ENCODE measurements at regions of chr4 and their contacts with region 1.

Region 1: DNA sequence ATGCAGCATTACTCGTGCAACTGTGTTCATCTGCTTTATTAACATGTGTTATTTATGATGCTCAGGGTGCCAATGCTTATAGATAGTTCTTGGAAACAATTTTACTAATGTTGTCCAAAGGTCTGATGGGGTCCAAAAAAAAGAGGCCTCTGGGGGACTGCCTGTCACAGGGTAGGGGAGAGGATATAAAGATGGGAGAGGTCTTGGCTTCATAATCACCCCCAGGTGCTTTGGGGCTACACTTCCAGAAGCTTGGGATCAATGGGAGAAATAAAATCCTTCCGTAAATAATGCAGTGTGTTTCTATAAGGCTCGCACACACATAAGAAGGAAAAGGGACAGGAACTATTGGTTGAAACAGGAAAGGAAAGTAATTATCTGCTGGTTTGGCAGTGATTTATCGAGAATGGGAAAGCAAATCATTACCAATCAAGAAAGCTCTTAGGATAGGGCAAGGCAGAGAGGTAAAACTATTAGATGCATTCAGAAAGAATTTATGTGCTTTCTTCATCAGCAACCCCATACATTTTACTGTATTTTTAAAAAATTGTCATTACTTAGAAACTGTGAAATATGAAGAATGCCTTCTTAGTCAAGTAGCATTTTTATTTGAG is 571.3 kb downstream of the PACRGL start:
- DNase-seq: no peak
- H3K4me3 ChIP-seq: no peak overlapping the region
- H3K27ac ChIP-seq: no peak overlapping the region
- H3K4me1 ChIP-seq: no peaks in the 10 kb centered on the region
- H3K27me3 ChIP-seq: no peaks in the 10 kb centered on the region
- CTCF ChIP-seq: no peak
- POLR2A ChIP-seq: no peak

Region 2: GRCh38 chr4:19539201-19539600 is 1732.3 kb before region 1 on chr4:
- intact Hi-C with region 1: loop called (anchors 5 kb)
- DNase-seq: no peak
- H3K4me3 ChIP-seq: no peak overlapping the region
- H3K27ac ChIP-seq: no peak overlapping the region
- H3K4me1 ChIP-seq: no peaks in the 10 kb centered on the region
- H3K27me3 ChIP-seq: no peaks in the 10 kb centered on the region
- CTCF ChIP-seq: no peak
- POLR2A ChIP-seq: no peak

Region 3: GRCh38 chr4:21181716-21182115 is 89.8 kb before region 1 on chr4:
- intact Hi-C with region 1: no loop called
- DNase-seq: no peak
- H3K4me3 ChIP-seq: no peak overlapping the region
- H3K27ac ChIP-seq: no peak overlapping the region
- H3K4me1 ChIP-seq: no peaks in the 10 kb centered on the region
- H3K27me3 ChIP-seq: no peaks in the 10 kb centered on the region
- CTCF ChIP-seq: no peak
- POLR2A ChIP-seq: no peak

Measured in vagina (tissue), 2 donors.